Activated CD8-positive, alpha-beta T cell treated with anti-CD3 and anti-CD28 coated beads for 36 hours (primary cell): ENCODE measurements at regions of chr17 and their contacts with region 1.

Region 1: GRCh38 chr17:1716076-1716995 is 6.2 kb upstream of the TLCD2 start:
- DNase-seq: peak; percentile 100
- ATAC-seq: peak; percentile 89
- H3K4me3 Mint-ChIP-seq: peak overlapping the region; percentile 93
- H3K27ac Mint-ChIP-seq: peak overlapping the region; percentile 97
- H3K4me1 Mint-ChIP-seq: peaks cover 19% of the 10 kb centered on the region
- H3K27me3 Mint-ChIP-seq: peaks cover 6% of the 10 kb centered on the region
- CTCF ChIP-seq: no peak

Region 2: DNA sequence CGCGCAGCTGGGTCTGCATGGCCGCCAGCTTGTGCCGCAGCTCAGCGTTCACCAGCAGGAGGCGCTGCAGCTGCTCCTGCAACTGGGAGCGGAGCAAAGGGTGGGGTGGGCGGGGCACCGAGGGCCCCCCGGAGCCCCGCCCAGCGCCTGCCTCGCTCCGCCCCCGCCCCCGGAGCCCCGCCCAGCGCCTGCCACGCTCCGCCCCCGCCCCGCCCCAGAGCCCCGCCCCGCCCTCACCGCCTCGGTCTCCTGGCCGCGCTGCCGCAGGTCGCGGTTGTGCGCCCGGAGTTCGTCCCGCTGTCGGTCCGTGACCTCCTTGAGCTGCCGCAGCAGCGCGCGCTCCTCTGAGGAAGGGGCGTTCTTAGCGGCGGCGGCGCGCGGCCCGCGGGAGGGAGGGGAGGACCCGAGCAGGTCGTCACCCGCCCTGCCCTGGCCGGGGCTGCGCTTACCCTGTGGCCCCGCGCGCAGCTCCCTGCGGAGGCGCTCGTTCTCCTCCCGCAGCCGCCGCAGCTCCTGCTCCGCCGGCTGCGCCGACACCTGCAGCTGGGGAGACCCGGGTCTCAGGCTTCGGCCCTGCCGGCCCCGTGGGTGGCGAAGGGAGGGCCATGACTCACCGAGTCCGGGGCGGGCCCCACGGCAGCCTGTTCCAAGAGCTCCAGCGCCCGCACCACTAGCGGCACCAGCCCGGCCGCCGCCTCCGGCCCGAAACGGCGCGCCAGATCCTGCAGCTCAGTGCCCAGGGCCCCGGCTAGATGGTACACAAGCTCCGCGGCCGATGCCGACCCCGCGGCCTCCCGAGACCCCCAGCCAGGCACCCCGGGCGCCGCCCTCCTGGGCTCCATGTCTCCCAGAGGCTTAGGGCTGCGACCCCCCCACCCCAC is 67.1 kb before region 1 on chr17:
- CTCF ChIA-PET with region 1: interaction called, 8 read pairs
- POLR2A ChIA-PET with region 1: interaction called, 10 read pairs
- intact Hi-C with region 1: no loop called
- DNase-seq: peak; percentile 95
- ATAC-seq: peak; percentile 72
- H3K4me3 Mint-ChIP-seq: peak overlapping the region; percentile 63
- H3K27ac Mint-ChIP-seq: peak overlapping the region; percentile 46
- H3K4me1 Mint-ChIP-seq: peaks cover 35% of the 10 kb centered on the region
- H3K27me3 Mint-ChIP-seq: no peaks in the 10 kb centered on the region
- CTCF ChIP-seq: peak; percentile 82

Region 3: DNA sequence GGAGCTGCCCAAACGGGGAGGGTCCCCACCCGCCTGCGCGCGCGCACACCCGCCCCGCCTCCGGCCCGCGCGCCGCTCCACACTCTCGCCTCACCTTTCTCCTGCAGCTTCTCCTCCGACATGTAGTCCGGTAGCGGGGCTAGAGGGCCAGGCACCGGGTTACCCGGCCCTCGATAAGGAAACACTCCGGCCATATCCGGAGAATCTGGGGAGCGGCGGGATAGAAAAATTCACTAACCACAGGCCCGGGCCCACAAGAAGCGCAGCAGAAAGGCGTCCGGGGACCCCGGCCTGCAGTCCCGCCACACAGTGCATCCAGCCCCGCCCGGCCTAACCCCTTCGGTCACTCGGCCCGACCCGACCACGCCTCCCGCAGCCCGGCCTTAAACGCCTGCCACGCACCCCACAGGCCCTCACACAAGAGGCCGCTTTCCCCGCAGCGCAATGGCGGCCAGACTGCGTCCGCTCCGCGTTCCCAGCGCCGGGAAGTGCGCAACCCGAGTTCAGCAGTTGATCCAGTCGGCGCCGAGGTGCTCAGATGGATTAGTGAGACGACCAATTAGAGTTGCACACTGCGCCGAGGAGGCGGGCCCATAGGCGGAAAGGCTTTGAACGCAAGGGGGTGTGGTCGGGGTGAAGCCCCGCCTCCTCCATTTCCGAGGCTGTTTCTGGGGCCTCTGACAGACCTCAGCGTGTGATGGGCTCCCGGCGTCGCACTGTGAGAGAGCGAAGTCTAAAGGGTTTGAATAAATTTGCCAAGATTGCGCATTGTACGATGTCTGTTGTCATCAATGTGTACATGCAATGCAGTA is 31.8 kb before region 1 on chr17 and contains the start of gene PRPF8:
- CTCF ChIA-PET with region 1: interaction called, 4 read pairs
- POLR2A ChIA-PET with region 1: interaction called, 17 read pairs
- intact Hi-C with region 1: no loop called
- DNase-seq: peak; percentile 99
- ATAC-seq: peak; percentile 100
- H3K4me3 Mint-ChIP-seq: peak within 1 kb of the TSS; percentile 96
- H3K27ac Mint-ChIP-seq: peak within 1 kb of the TSS; percentile 93
- H3K4me1 Mint-ChIP-seq: peaks cover 32% of the 10 kb centered on the region
- H3K27me3 Mint-ChIP-seq: no peaks in the 10 kb centered on the region
- CTCF ChIP-seq: no peak
- total RNA-seq, gene PRPF8: 370 to 428 TPM

Region 4: DNA sequence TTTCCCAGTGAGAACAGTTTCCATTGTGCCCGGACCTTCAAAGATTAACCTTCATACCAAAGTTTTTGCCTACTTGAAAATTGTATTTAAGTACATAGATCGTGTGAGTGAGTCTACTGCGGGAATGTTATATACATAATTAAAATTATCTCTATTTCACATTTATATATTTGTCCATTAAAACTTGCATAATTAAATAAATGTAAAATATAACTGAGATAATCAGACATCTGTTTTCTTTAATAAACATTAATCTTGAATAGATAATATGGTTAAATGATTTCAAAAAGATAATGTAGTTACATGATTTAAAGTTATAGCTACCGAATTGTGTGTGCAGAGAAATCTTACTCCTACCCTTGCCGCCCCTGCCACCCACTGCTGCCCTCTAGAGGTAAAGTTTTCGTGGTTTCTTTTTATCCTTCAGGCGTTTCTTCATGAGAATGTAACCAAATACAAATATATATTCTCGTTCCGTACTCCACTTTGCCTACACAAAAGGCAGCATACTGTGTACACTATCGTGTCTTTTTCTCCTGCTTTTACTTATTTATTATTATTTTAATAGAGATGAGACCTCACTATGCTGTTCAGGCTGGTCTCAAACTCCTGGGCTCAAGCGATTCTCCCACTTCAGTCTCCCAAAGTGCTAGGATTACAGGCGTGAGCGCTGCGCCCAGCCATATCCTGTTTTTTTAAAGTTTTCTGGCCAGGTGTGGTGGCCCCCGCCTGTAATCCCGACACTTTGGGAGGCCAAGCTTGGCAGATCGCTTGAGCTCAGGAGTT is 149.1 kb after region 1 on chr17:
- CTCF ChIA-PET with region 1: interaction called, 23 read pairs
- POLR2A ChIA-PET with region 1: interaction called, 8 read pairs
- intact Hi-C with region 1: loop called (anchors 5 kb)
- DNase-seq: peak; percentile 64
- ATAC-seq: peak; percentile 60
- H3K4me3 Mint-ChIP-seq: no peak overlapping the region
- H3K27ac Mint-ChIP-seq: no peak overlapping the region
- H3K4me1 Mint-ChIP-seq: peaks cover 18% of the 10 kb centered on the region
- H3K27me3 Mint-ChIP-seq: no peaks in the 10 kb centered on the region
- CTCF ChIP-seq: peak; percentile 79

Region 5: GRCh38 chr17:2266045-2266864 is 549.9 kb after region 1 on chr17:
- CTCF ChIA-PET with region 1: no interaction called
- POLR2A ChIA-PET with region 1: no interaction called
- intact Hi-C with region 1: loop called (anchors 5 kb)
- DNase-seq: peak; percentile 98
- ATAC-seq: peak; percentile 77
- H3K4me3 Mint-ChIP-seq: peak overlapping the region; percentile 79
- H3K27ac Mint-ChIP-seq: peak overlapping the region; percentile 98
- H3K4me1 Mint-ChIP-seq: peaks cover 82% of the 10 kb centered on the region
- H3K27me3 Mint-ChIP-seq: no peaks in the 10 kb centered on the region
- CTCF ChIP-seq: no peak